A673 (cell line): ENCODE measurements at regions of chr1 and their contacts with region 1.

Region 1: DNA sequence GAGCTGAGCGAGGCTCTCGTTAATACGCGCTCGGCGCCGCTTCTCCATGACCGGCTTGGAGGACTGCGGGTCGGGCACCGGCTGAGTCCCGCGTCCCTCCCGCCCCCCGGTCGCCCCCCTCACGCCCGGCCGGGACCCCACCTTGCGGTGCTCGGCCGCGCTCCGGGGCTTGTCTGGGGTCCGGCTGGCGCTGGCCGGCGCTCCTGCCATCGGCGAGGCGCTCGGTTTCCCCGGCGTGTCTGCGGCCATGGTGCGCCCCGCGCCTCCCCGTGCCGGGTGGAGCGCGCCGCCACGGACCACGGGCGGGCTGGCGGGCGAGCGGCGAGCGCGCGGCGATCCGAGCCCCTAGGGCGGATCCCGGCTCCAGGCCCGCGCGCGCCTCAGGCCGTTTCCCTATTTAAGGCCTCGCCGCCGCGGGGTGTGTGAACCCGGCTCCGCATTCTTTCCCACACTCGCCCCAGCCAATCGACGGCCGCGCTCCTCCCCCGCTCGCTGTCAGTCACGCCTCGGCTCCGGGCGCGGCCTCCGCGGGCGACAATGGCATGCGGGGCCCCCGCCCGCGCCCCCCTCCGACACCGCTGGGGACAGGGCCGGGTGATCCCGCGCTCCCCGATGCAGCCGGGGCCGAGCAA is at the start of gene HES4:
- DNase-seq: peak; percentile 95
- H3K4me3 ChIP-seq: peak within 1 kb of the TSS; percentile 70
- H3K27ac ChIP-seq: peak within 1 kb of the TSS; percentile 98
- H3K4me1 ChIP-seq: peaks cover 16% of the 10 kb centered on the region
- H3K27me3 ChIP-seq: no peaks in the 10 kb centered on the region
- CTCF ChIP-seq: no peak
- total RNA-seq, gene HES4: 18.5 and 20.8 TPM in 2 replicates

Region 2: GRCh38 chr1:1013105-1013921 is 13.5 kb after region 1 on chr1 and contains the start of gene ISG15:
- CTCF ChIA-PET with region 1: interaction called, 14 read pairs
- POLR2A ChIA-PET with region 1: no interaction called
- intact Hi-C with region 1: no loop called
- DNase-seq: peak; percentile 90
- H3K4me3 ChIP-seq: peak within 1 kb of the TSS; percentile 53
- H3K27ac ChIP-seq: peak within 1 kb of the TSS; percentile 85
- H3K4me1 ChIP-seq: peaks cover 15% of the 10 kb centered on the region
- H3K27me3 ChIP-seq: no peaks in the 10 kb centered on the region
- CTCF ChIP-seq: no peak
- total RNA-seq, gene ISG15: 45.3 and 55.6 TPM in 2 replicates

Region 3: GRCh38 chr1:1040004-1040991 is 40.5 kb after region 1 on chr1:
- CTCF ChIA-PET with region 1: no interaction called
- POLR2A ChIA-PET with region 1: no interaction called
- intact Hi-C with region 1: no loop called
- DNase-seq: peak; percentile 94
- H3K4me3 ChIP-seq: peak overlapping the region; percentile 40
- H3K27ac ChIP-seq: peak overlapping the region; percentile 30
- H3K4me1 ChIP-seq: peaks cover 17% of the 10 kb centered on the region
- H3K27me3 ChIP-seq: no peaks in the 10 kb centered on the region
- CTCF ChIP-seq: peak; percentile 21; the same call in 1 of the 2 replicates